A549 (cell line): ENCODE measurements at regions of chr5 and their contacts with region 1.

Region 1: DNA sequence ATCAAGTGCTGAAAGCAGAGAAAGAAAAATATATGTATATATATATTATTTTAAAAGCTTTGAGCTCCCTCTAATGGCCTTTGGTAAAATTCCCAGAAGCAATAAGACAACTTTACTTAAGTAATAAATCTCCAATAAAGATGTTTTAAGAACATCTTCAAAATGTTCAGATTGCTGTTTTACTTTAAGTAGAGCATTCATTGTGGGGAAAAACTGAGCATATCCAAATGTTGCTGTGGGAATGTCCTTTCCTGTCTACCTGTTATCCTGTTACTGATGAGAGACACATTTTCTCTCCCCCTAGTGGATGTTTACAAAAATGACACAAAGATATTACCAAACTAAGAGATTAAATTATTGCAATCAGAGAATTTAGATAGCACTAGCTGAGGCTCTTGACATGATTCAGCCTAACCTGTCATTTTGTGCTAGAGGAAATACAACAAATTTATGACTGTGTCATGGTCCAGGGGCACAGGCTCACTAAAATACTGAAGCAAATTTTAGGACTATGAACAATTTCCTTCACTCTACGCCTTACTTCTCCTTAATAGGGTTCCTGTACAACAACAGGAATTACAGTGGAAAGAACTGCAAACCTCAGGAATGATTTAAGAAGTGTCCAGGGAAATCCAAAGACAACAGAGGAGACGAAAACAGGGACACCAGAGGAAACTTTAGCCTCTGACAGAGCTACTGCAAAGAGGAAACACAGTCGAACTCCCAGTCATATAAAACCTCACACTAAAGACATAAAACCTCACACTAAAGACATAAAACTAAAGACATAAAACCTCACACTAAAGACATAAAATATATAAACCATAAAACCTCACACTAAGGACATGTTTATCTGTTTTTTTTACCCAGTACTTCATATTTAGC is 24.3 kb upstream of the PRRC1 start:
- DNase-seq: peak; percentile 39 to 52
- ATAC-seq: peak; percentile 67 to 83; a peak in 4 of 6 replicates
- H3K4me3 ChIP-seq: no peak overlapping the region
- H3K27ac ChIP-seq: no peak overlapping the region
- H3K4me1 ChIP-seq: no peaks in the 10 kb centered on the region
- CTCF ChIP-seq: peak; percentile 100
- EP300 ChIP-seq: no peak
- POLR2A ChIP-seq: no peak
- RAD21 ChIP-seq: peak; percentile 39 to 84; a peak in 4 of 5 replicates

Region 2: GRCh38 chr5:127290019-127290945 is 202.8 kb before region 1 on chr5 and contains the start of gene MEGF10:
- CTCF ChIA-PET with region 1: interaction called, 15 read pairs
- POLR2A ChIA-PET with region 1: no interaction called
- DNase-seq: peak in 1 of 2 experiments; percentile 48
- ATAC-seq: peak; percentile 87 to 96
- H3K4me3 ChIP-seq: peak within 1 kb of the TSS; percentile 34
- H3K27ac ChIP-seq: no peak within 1 kb of the TSS
- H3K4me1 ChIP-seq: no peaks in the 10 kb centered on the region
- CTCF ChIP-seq: peak; percentile 67
- EP300 ChIP-seq: no peak
- POLR2A ChIP-seq: no peak
- RAD21 ChIP-seq: peak; percentile 79 to 80
- polyA plus RNA-seq, gene MEGF10: 0.01 TPM in 1 of 2 replicates, not detected in the other

Region 3: DNA sequence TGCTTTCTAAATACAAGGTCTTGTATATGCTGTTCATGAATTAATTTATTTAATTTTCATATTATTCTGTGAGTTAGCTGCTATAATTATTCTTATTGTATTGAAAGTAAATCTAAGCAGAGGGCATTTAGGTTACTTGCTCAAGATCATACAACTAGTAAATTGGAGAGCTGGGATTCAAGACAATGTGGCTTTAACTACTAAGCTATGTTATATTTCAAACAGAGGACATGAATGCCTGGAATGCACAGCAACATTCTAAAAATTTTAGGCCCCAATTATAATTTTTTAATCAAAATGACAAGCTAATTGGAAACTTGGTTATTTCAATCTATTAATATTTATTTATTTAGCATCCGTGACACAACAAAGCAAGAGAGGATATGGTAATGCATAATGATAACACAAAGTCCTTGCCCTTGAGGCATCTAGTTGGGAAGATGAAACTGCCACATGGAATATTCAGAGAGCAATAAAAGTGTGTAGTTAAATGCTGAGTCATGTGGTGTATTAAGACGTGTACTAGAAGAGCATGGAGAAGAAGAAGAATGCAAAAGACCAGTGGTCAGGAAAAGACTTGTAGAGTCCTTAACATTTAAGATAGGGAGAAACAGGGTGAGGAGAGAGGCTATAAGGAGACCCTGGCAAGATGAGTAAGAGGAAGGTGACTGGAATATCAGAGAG is 180.2 kb after region 1 on chr5:
- CTCF ChIA-PET with region 1: no interaction called
- POLR2A ChIA-PET with region 1: no interaction called
- DNase-seq: peak in 1 of 2 experiments; percentile 7
- ATAC-seq: no peak
- H3K4me3 ChIP-seq: no peak overlapping the region
- H3K27ac ChIP-seq: no peak overlapping the region
- H3K4me1 ChIP-seq: peaks cover 6% of the 10 kb centered on the region; the same call in 1 of the 3 replicates
- CTCF ChIP-seq: no peak
- EP300 ChIP-seq: no peak
- POLR2A ChIP-seq: no peak
- RAD21 ChIP-seq: no peak